ENCODE measurements at regions of chr5 and their contacts with region 1.

Region 1: DNA sequence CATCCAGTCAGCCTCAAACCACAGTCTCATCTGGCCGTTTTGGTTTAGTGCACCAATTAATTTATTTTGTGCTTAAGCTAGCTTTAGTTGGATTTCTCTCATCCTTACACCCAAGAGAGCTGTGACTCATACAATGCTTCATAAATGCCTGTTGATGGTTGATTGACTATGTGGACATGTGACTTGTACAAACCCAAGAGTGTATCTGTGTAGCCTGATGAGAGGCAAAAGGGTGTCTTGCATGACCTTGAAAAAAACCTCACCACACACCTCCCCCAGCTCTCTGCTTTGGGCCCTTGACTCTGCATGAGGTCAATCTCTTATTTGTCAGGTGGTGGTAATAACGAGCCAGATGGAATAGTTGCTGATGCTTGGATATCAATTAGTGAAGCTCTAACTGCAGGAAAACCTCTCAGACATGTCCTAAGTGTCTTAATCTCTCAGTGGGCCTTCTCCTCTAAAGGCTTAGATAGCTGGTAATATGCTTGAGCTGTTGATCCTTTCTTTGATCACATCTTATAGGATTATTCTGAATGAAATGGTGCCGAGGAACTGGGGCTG is 10.6 kb upstream of the GLRA1 start:
- DNase-seq: no peak
- H3K4me3 ChIP-seq: no peak overlapping the region
- H3K27ac ChIP-seq: no peak overlapping the region
- H3K4me1 ChIP-seq: no peaks in the 10 kb centered on the region
- H3K27me3 ChIP-seq: no peaks in the 10 kb centered on the region
- CTCF ChIP-seq: no peak

Region 2: DNA sequence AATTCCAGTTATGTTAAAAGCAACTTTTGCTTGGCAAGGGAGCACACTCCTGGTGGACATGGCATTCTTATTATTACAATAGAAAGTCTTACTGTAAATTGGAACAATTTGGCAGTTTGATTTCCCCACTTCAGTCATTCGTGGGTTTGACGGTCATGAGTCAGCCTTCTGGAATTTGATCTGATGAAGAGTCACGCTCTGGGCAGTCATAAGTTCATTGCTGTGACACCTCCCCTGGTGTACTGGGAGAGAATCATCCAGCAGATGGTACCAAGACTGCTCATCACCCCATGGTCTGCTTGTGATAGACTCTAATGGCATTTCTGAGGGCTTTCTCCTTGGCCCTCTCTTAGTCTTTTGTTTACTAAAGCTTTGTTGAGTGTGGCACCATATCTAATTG is 64.4 kb before region 1 on chr5:
- CTCF ChIA-PET with region 1: no interaction called
- POLR2A ChIA-PET with region 1: no interaction called
- intact Hi-C with region 1: no loop called
- DNase-seq: no peak
- H3K4me3 ChIP-seq: no peak overlapping the region
- H3K27ac ChIP-seq: no peak overlapping the region
- H3K4me1 ChIP-seq: no peaks in the 10 kb centered on the region
- H3K27me3 ChIP-seq: 0 out of 2 replicates have a peak, but pooled peaks cover 3% of the 10 kb centered on the region
- CTCF ChIP-seq: no peak

Region 3: DNA sequence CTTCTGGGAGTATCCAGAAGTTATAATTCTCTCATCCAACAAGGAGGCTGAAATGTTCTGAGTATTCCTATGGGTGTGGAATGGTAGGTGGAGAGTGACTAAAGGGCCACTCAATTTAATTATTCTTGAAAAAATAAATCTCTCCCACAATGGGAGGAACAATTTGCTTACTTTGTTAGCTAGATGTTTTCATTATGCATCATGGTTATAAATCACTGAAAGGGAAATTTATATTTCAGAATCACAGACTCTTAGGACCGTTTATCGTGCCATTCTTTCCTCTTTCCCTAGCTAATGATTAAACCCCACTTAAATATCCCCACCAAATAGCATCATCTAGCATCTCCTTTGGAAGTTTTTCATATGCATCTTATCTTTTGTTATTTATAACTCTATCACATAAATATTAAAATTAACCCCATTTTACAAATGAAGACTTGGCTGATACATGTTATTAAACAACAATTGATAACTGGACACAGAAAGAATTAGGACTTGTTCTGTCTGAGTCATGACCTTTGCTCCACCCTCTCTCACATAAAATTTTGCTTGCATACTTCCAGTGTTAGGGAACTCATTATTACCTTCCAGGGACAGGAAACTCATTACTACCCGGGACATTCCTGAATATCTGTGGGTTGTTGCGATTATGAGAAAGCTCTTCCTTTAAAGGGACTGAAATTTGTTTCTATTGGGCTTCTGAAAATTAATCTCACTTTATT is 564.8 kb after region 1 on chr5:
- CTCF ChIA-PET with region 1: interaction called, 17 read pairs
- POLR2A ChIA-PET with region 1: no interaction called
- intact Hi-C with region 1: no loop called
- DNase-seq: no peak
- H3K4me3 ChIP-seq: no peak overlapping the region
- H3K27ac ChIP-seq: no peak overlapping the region
- H3K4me1 ChIP-seq: no peaks in the 10 kb centered on the region
- H3K27me3 ChIP-seq: peaks cover 8% of the 10 kb centered on the region; the same call in 1 of the 2 replicates
- CTCF ChIP-seq: no peak

Measured in PC-9 (cell line).